Head of caudate nucleus (tissue), 42 donors: ENCODE measurements at regions of chr7 and their contacts with region 1.

Region 1: DNA sequence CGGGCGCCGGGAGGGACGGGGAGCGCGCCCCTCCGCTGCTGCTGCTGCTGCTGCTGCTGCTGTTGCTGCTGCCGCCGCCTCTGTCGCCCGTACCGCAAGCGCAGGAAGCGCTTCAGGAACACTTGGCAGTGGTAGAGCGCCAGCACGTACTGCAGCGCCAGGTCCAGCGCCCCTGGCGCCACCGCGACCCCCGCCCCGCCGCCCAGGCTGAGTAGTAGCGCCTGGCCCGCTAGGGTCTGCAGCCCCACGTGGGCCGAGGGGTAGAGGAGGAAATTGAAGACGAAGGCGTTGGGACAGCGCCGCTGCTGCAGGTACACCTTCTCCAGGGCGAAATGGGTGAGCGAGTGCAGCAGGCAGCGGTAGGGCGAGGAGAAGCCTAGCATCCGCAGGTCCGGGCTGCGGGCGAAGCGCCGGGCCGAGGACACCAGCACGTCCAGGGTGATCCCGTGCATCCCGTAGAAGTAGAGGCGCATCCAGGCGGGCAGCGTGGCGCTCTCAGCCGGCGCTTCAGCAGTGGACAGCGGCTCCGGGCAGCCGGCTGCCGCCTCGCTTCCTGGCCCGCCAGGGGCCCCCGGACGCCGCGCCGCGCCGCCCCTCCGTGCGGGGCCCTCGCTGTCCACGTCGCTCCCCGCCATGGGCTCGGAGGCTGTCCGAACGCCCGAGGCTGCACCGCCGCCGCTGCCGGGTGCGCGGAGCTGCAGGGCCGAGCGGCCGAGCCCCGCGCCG is at the start of gene TMEM229A:
- DNase-seq: peak; percentile 24 to 85 (median 69)

Region 2: DNA sequence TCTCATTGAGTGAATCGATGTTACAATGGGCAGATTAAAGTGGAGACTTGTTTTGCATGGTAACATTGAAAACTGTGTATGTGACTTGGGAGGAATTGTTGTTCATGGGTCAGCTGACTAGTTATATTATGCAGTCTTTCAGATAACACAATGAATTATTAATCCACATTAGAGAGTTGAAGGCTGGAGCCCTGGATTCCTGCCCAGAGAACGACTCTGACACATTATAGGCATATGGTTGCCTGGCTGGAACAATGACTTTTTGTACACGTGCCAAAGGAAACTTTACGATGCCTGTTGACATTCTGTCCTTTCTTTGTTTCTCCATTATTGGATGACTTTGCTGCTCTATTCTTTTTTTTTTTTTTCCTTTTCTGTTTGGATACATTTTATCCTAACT is 52.6 kb after region 1 on chr7:
- intact Hi-C with region 1: loop called (anchors 10 kb)
- DNase-seq: peak; percentile 24 to 96 (median 82)